CD4-positive, alpha-beta T cell (primary cell): ENCODE measurements at regions of chr19 and their contacts with region 1.

Region 1: GRCh38 chr19:17718947-17719711 is at the start of gene MAP1S:
- DNase-seq: peak; percentile 26 to 74 (median 52)
- ATAC-seq: peak; percentile 88
- H3K4me3 ChIP-seq: peak within 1 kb of the TSS; percentile 92
- H3K4me3 Mint-ChIP-seq: peak within 1 kb of the TSS; percentile 95
- H3K27ac ChIP-seq: no peak within 1 kb of the TSS
- H3K27ac Mint-ChIP-seq: peak within 1 kb of the TSS; percentile 90
- H3K4me1 ChIP-seq: peaks cover 39% of the 10 kb centered on the region
- H3K4me1 Mint-ChIP-seq: peaks cover 36% of the 10 kb centered on the region
- H3K27me3 ChIP-seq: no peaks in the 10 kb centered on the region
- H3K27me3 Mint-ChIP-seq: no peaks in the 10 kb centered on the region
- CTCF ChIP-seq: no peak
- total RNA-seq, gene MAP1S: 18.1 to 21.4 TPM

Region 2: GRCh38 chr19:17648097-17648660 is 71.0 kb before region 1 on chr19:
- CTCF ChIA-PET with region 1: no interaction called
- POLR2A ChIA-PET with region 1: no interaction called
- intact Hi-C with region 1: no loop called
- DNase-seq: no peak
- ATAC-seq: no peak
- H3K4me3 ChIP-seq: no peak overlapping the region
- H3K4me3 Mint-ChIP-seq: no peak overlapping the region
- H3K27ac ChIP-seq: no peak overlapping the region
- H3K27ac Mint-ChIP-seq: no peak overlapping the region
- H3K4me1 ChIP-seq: no peaks in the 10 kb centered on the region
- H3K4me1 Mint-ChIP-seq: no peaks in the 10 kb centered on the region
- H3K27me3 ChIP-seq: peaks cover 2 to 8% of the 10 kb centered on the region in 2 experiments
- H3K27me3 Mint-ChIP-seq: peaks cover 27% of the 10 kb centered on the region
- CTCF ChIP-seq: no peak

Region 3: GRCh38 chr19:17747205-17748098 is 28.3 kb after region 1 on chr19:
- CTCF ChIA-PET with region 1: no interaction called
- POLR2A ChIA-PET with region 1: interaction called, 19 read pairs
- intact Hi-C with region 1: loop called (anchors 1 kb)
- DNase-seq: peak; percentile 88 to 98 (median 94)
- ATAC-seq: peak; percentile 87
- H3K4me3 ChIP-seq: peak overlapping the region; percentile 69
- H3K4me3 Mint-ChIP-seq: peak overlapping the region; percentile 96
- H3K27ac ChIP-seq: no peak overlapping the region
- H3K27ac Mint-ChIP-seq: peak overlapping the region; percentile 82
- H3K4me1 ChIP-seq: peaks cover 56% of the 10 kb centered on the region
- H3K4me1 Mint-ChIP-seq: peaks cover 47% of the 10 kb centered on the region
- H3K27me3 ChIP-seq: no peaks in the 10 kb centered on the region
- H3K27me3 Mint-ChIP-seq: no peaks in the 10 kb centered on the region
- CTCF ChIP-seq: no peak